Ovary (tissue), 10 donors: ENCODE measurements at regions of chr17 and their contacts with region 1.

Region 1: DNA sequence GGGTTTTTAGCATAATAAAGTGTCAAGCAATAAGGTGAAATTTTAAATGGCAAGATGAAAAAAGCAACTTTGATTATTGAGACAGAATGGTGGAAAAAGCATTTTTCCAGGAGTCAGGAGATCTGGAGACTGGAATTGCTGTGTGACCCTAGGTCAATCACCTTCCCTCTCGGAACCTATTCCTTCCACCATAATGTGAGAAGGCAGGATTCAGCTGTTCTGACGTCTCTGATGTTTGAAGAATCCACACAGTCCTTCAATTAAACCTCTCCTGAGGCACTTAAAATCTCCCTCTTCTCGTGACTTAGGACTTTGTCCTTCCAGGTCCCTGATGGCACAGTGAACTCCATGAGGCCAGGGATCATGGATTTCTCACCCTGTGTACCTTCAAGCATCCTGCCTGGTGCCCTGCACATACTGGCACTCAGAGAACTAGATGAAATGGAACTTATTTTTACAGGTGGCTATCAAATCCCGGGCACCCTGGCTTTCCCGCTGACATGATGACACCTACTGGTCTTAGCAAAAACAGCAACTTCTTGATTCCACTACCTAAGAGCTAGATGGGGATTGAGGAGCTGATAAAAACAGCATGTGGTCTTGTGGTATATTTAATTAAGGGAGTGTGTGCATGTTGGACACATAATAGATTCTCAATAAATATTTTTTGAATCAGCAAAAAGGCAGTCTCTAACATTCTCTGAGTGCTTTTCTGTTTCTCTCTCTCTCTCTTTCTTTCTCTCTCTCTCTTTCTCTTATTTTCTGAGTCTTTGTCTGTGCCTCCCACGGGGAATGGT is 2.3 kb upstream of the CCDC182 start:
- DNase-seq: peak in 3 of 5 donors; percentile 28 to 43 (median 33)
- H3K4me3 ChIP-seq: no peak overlapping the region
- H3K27ac ChIP-seq: no peak overlapping the region
- H3K4me1 ChIP-seq: no peaks in the 10 kb centered on the region
- H3K27me3 ChIP-seq: no peaks in the 10 kb centered on the region
- CTCF ChIP-seq: peak; percentile 65 to 74 (median 71)
- EP300 ChIP-seq: no peak
- POLR2A ChIP-seq: no peak

Region 2: GRCh38 chr17:57130761-57131461 is 616.5 kb before region 1 on chr17:
- intact Hi-C with region 1: loop called (anchors 5 to 10 kb)
- DNase-seq: peak; percentile 83 to 92 (median 88)
- H3K4me3 ChIP-seq: no peak overlapping the region
- H3K27ac ChIP-seq: no peak overlapping the region
- H3K4me1 ChIP-seq: no peaks in the 10 kb centered on the region
- H3K27me3 ChIP-seq: no peaks in the 10 kb centered on the region
- CTCF ChIP-seq: peak; percentile 54 to 90 (median 75)
- EP300 ChIP-seq: no peak
- POLR2A ChIP-seq: no peak

Region 3: GRCh38 chr17:57234751-57235117 is 512.7 kb before region 1 on chr17:
- intact Hi-C with region 1: loop called in 1 of 4 experiments (anchors 10 kb)
- DNase-seq: no peak
- H3K4me3 ChIP-seq: no peak overlapping the region
- H3K27ac ChIP-seq: no peak overlapping the region
- H3K4me1 ChIP-seq: no peaks in the 10 kb centered on the region
- H3K27me3 ChIP-seq: no peaks in the 10 kb centered on the region
- CTCF ChIP-seq: no peak
- EP300 ChIP-seq: no peak
- POLR2A ChIP-seq: no peak

Region 4: DNA sequence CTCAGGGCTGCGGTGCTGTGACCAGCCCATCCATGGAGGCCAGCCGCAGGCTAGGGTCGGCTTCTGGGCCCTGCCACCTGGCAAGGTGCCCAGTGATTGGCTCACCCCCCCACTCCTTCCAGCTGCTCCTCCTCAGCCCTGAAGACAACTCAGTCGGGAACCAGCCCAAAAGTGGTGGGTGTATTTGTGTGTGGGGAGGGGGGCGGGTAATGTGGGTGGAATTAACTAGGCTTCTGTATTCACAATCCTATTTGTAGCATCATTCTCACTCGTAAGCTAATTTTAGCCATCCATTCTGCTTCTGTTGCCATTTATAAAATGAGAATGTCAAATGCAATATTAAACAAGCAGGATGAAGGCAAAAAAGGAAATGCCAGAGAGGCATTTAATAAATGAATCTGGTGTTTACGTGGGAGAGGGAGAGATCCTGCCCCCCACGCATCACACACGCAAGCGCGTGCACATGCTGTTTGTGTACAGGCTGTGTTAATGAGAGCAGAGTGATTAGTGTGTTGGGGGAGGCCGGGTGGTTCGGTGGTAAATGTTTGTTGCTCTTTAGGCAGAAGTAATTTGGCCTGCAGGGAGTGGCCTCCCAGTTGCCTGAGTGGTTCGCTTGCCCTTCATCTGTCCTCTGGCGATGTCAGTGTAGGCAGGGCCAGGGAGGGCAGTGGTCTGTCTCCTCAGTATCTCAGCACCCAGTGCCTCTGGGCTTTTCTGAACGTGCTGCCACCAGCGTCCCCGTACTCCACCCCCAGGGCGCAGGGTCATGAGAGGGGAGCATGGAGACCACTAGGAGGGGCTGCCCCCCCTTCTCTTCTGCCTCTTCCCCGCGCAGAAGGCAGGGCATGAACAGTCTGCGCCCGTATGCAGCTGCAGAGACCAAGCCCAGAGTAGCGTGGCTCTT is 142.4 kb before region 1 on chr17:
- intact Hi-C with region 1: loop called in 1 of 4 experiments (anchors 10 kb)
- DNase-seq: peak; percentile 74 to 83 (median 80)
- H3K4me3 ChIP-seq: no peak overlapping the region
- H3K27ac ChIP-seq: peak overlapping the region; percentile 63 to 72
- H3K4me1 ChIP-seq: peaks cover 17% of the 10 kb centered on the region
- H3K27me3 ChIP-seq: no peaks in the 10 kb centered on the region
- CTCF ChIP-seq: peak in 1 of 3 donors; percentile 7
- EP300 ChIP-seq: no peak
- POLR2A ChIP-seq: no peak

Region 5: GRCh38 chr17:57833179-57833939 is 85.9 kb after region 1 on chr17:
- intact Hi-C with region 1: loop called in 1 of 4 experiments (anchors 5 kb)
- DNase-seq: peak; percentile 64 to 76 (median 68)
- H3K4me3 ChIP-seq: peak overlapping the region; percentile 33
- H3K27ac ChIP-seq: peak overlapping the region in 1 of 2 donors; percentile 38
- H3K4me1 ChIP-seq: no peaks in the 10 kb centered on the region
- H3K27me3 ChIP-seq: no peaks in the 10 kb centered on the region
- CTCF ChIP-seq: peak; percentile 79 to 90 (median 83)
- EP300 ChIP-seq: no peak
- POLR2A ChIP-seq: no peak